CD8-positive, alpha-beta T cell (primary cell): ENCODE measurements at regions of chr16 and their contacts with region 1.

Region 1: DNA sequence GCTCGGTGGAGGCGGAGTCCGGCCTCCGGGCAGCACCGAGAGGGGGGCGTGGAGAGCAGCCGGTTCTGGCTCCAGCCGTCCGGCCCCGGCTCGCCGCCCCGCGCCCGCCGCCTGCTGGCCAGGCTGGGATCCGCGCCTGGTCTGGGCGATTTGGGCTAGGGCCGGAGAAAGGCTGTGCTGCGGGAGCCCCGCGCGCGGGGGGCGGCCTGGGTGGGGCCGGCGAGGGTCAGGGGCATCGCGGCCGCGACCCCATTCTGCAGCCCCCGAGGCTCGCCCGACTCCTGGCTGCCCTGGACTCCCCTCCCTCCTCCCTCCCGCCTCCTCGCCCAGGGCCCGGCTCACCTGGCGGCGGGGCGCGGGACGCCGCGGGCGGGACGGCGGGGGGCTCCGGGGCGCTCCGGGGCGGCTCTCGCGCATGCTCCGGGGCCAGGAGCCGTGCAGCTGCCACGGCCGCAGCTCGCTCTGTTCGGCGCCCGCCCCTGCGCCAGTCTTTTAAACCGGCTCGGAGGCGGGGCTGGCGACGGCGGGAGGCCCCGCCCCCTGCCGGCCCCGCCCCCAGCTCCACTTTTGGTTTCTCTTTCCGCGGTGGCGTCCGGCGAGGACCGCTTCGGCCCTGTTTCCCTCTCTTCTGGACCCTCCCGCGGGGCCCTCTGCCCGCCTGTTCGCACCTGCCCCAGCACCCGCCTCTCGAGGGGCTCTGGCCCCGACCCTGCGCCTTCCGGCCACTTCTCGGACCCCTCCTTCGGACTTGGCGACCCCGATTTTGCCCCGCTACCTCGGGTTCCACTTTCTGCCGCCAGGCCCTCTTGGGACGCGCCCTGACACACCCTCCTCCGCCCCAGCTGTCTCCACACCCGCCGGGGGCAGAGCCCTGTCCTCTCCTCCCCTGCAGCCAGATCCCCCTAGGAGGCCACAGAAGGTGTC is at the start of gene SOCS1:
- DNase-seq: peak; percentile 75 to 94 (median 87)
- ATAC-seq: peak; percentile 64
- H3K4me3 ChIP-seq: peak within 1 kb of the TSS; percentile 90 to 96
- H3K4me3 Mint-ChIP-seq: peak within 1 kb of the TSS; percentile 97
- H3K27ac ChIP-seq: peak within 1 kb of the TSS; percentile 81 to 93
- H3K27ac Mint-ChIP-seq: peak within 1 kb of the TSS; percentile 96
- H3K4me1 ChIP-seq: peaks cover 61% of the 10 kb centered on the region
- H3K4me1 Mint-ChIP-seq: peaks cover 56% of the 10 kb centered on the region
- H3K27me3 ChIP-seq: no peaks in the 10 kb centered on the region
- H3K27me3 Mint-ChIP-seq: no peaks in the 10 kb centered on the region
- CTCF ChIP-seq: peak; percentile 77
- total RNA-seq, gene SOCS1: 74.5 to 75.6 TPM

Region 2: GRCh38 chr16:10964039-10964890 is 291.7 kb before region 1 on chr16:
- CTCF ChIA-PET with region 1: interaction called, 17 read pairs
- POLR2A ChIA-PET with region 1: interaction called, 15 read pairs
- intact Hi-C with region 1: loop called in 1 of 2 experiments (anchors 2 kb)
- DNase-seq: peak; percentile 57 to 89 (median 82)
- ATAC-seq: peak; percentile 58
- H3K4me3 ChIP-seq: peak overlapping the region in 1 of 2 experiments; percentile 7
- H3K4me3 Mint-ChIP-seq: peak overlapping the region; percentile 18
- H3K27ac ChIP-seq: no peak overlapping the region
- H3K27ac Mint-ChIP-seq: peak overlapping the region; percentile 49
- H3K4me1 ChIP-seq: peaks cover 4% of the 10 kb centered on the region
- H3K4me1 Mint-ChIP-seq: peaks cover 16% of the 10 kb centered on the region
- H3K27me3 ChIP-seq: no peaks in the 10 kb centered on the region
- H3K27me3 Mint-ChIP-seq: no peaks in the 10 kb centered on the region
- CTCF ChIP-seq: peak; percentile 90

Region 3: DNA sequence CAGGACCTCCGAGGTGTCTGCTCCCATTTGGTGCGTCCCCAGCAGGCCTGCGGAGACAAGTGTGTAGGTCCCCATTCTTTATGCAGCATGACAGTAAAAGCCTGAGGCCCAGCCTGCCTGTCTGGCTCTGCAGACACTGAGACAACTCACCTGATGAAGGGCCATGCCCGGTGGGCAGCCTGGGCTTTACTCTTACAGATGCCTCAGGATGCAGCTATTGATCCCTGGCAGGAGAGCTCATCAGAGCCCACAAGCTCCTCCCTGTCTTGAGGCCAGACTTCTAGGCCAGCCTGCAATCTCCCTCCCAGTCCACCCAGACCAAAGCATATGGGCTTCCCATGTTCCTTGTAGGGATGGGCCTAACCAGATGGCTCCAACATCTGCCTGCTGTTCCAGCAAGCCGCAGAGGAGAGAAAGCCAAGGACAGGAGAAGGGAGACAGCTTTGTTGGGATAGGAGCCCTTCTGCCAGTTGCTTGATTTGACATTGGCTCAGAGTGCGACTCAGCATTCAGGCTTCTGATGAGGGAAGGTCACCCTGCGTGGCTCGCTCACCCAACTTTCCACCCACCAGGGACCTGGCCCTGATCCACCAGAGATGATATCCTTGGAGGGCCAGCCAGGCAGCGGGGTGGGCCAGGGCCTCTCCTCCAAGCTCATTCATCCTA is 87.5 kb before region 1 on chr16:
- CTCF ChIA-PET with region 1: no interaction called
- POLR2A ChIA-PET with region 1: no interaction called
- intact Hi-C with region 1: no loop called
- DNase-seq: no peak
- ATAC-seq: no peak
- H3K4me3 ChIP-seq: no peak overlapping the region
- H3K4me3 Mint-ChIP-seq: no peak overlapping the region
- H3K27ac ChIP-seq: no peak overlapping the region
- H3K27ac Mint-ChIP-seq: peak overlapping the region; percentile 29
- H3K4me1 ChIP-seq: no peaks in the 10 kb centered on the region
- H3K4me1 Mint-ChIP-seq: no peaks in the 10 kb centered on the region
- H3K27me3 ChIP-seq: no peaks in the 10 kb centered on the region
- H3K27me3 Mint-ChIP-seq: no peaks in the 10 kb centered on the region
- CTCF ChIP-seq: no peak

Region 4: DNA sequence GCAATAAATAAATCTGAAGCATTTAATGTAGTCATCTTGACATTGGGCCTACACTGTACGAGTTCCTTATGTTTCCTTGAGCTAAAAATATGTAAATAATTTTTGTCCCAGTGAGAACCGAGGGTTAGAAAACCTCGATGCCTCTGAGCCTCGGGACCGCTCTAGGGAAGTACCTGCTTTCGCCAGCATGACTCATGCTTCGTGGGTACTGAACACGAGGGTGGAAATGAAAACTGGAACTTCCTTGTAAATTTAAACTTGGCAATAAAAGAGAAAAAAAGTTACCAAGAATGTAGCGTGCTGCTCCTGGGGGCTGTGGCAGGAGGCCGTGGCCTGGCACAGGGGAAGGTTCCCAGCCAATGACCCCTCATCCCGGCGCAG is 74.1 kb before region 1 on chr16:
- CTCF ChIA-PET with region 1: interaction called, 3 read pairs
- POLR2A ChIA-PET with region 1: no interaction called
- intact Hi-C with region 1: loop called in 1 of 2 experiments (anchors 10 kb)
- DNase-seq: peak in 1 of 9 experiments; percentile 34
- ATAC-seq: no peak
- H3K4me3 ChIP-seq: no peak overlapping the region
- H3K4me3 Mint-ChIP-seq: no peak overlapping the region
- H3K27ac ChIP-seq: no peak overlapping the region
- H3K27ac Mint-ChIP-seq: no peak overlapping the region
- H3K4me1 ChIP-seq: peaks cover 4% of the 10 kb centered on the region
- H3K4me1 Mint-ChIP-seq: peaks cover 6% of the 10 kb centered on the region
- H3K27me3 ChIP-seq: no peaks in the 10 kb centered on the region
- H3K27me3 Mint-ChIP-seq: no peaks in the 10 kb centered on the region
- CTCF ChIP-seq: no peak

Region 5: DNA sequence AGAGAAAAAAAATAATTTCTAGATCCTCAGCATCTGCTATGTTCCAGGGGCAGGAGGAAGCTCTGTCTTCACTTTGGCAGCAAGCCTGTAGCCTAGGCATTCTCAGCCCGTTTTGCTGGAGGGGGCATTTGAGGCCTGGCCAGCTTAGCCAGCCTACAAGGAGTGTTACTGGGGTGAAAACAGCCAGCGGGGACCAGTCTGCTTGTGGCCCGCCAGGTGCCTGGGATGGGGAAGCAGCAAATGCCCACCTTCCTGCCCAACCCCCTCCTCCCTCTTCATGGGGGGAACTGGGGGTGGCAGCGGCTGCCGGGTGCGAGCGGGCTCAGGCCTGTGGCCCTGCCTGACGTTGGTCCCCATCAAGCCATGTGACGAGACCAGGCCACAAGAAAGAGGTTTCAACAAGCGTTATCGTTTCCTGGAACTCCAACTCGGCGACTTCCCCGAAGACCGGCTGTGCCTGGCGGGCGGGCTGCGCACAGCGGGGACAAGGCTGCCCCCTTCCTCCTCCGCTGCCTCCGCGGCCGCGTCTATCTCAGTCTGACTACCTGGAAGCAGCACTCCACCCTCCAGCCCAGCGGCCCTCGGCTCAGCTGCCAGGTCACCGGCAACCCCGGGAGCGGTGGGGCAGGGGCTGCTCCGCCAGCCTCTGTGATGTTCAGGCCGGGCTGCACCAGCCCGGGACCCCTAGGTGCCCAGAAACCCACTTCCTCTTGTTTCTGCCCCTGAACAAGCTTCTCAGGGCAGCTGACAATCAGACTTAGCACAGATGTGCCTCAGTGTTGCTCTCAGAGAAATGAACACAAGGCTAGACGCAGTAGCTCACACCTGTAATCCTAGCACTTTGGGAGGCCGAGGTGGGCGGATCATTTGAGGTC is 22.9 kb before region 1 on chr16:
- CTCF ChIA-PET with region 1: interaction called, 7 read pairs
- POLR2A ChIA-PET with region 1: interaction called, 36 read pairs
- intact Hi-C with region 1: loop called (anchors 1 kb)
- DNase-seq: peak; percentile 59 to 94 (median 82)
- ATAC-seq: peak; percentile 84
- H3K4me3 ChIP-seq: peak overlapping the region; percentile 37 to 45
- H3K4me3 Mint-ChIP-seq: peak overlapping the region; percentile 63
- H3K27ac ChIP-seq: peak overlapping the region; percentile 78 to 94
- H3K27ac Mint-ChIP-seq: peak overlapping the region; percentile 94
- H3K4me1 ChIP-seq: peaks cover 44% of the 10 kb centered on the region
- H3K4me1 Mint-ChIP-seq: peaks cover 55% of the 10 kb centered on the region
- H3K27me3 ChIP-seq: no peaks in the 10 kb centered on the region
- H3K27me3 Mint-ChIP-seq: no peaks in the 10 kb centered on the region
- CTCF ChIP-seq: no peak

Region 6: DNA sequence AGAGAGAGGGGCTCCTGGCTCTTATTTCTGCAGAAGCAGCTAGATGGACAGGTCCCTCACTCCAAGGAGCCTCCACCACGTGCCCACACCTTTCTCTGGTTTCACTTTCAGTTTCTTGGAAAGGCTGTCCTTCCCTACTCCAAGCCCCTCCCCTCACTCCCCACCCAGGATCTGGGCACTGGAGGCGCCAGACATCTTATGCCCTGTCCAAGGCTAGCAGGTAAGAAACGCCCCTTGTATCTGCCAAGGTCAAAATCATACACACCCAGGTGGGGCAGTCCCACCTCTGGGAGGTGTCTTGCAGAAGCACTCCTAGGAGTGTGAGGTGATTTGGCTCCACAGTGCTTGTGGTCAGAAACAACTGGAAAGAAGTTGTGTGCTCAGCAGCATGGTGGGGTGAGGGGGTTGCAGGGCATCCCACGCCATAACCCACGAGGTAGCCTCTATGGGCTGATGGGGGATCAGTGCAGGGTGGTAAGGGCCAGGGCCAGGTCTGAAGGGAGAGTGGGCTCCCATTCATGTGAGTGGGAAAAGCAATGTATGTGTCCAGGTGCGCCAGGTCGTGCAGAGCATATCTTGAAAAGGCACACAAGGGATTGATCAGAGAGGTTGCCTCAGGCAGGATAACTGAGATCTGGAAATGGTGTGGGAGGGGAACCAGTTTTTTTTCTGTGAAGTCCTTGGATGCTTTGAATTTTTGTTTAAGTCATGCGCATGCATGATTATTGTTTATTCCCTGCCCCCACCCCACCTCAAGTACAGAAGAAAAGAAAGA is 56.9 kb after region 1 on chr16:
- CTCF ChIA-PET with region 1: interaction called, 4 read pairs
- POLR2A ChIA-PET with region 1: interaction called, 10 read pairs
- intact Hi-C with region 1: loop called in 1 of 2 experiments (anchors 5 kb)
- DNase-seq: peak in 3 of 9 experiments; percentile 28 to 58 (median 33)
- ATAC-seq: peak; percentile 16
- H3K4me3 ChIP-seq: no peak overlapping the region
- H3K4me3 Mint-ChIP-seq: peak overlapping the region; percentile 20
- H3K27ac ChIP-seq: no peak overlapping the region
- H3K27ac Mint-ChIP-seq: peak overlapping the region; percentile 41
- H3K4me1 ChIP-seq: peaks cover 48% of the 10 kb centered on the region
- H3K4me1 Mint-ChIP-seq: peaks cover 48% of the 10 kb centered on the region
- H3K27me3 ChIP-seq: no peaks in the 10 kb centered on the region
- H3K27me3 Mint-ChIP-seq: no peaks in the 10 kb centered on the region
- CTCF ChIP-seq: no peak

Region 7: DNA sequence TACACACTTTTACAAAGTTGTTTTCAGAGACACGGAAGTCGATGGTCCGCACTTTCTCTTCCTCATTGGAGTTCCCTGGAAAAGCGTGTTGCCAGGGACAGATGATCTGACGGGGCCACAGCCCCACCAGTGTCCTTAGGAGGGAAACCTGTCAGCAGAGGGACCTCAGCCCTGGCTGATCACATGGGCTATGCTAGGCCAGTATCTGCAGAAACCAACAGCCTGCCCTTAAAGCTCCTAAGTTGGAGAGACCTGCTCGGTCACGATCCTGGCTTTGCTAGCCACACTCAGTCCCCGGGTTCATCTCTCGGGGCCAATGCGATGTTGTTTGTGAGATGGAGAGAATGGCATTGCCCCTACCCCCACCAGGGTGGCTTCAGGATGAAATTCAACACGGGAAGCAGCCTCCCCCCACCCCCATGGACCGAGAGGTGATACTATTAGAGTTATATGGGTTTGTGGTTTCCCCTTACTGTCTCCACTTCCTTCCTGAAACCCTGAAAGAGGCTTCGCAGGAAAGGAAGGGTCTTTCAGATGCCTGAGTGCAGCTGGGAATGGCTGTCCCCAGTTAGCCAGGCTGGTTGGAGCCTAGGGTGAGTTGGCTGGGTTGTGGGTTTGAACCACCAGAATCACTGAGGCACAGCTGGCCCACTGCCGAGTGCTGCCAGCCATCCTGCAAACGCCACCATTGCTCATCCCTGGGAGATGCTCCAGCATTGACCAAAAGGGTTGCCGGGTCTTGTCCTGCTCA is 105.9 kb after region 1 on chr16:
- CTCF ChIA-PET with region 1: interaction called, 11 read pairs
- POLR2A ChIA-PET with region 1: interaction called, 7 read pairs
- intact Hi-C with region 1: no loop called
- DNase-seq: peak in 7 of 9 experiments; percentile 15 to 61 (median 32)
- ATAC-seq: peak; percentile 67
- H3K4me3 ChIP-seq: peak overlapping the region; percentile 16 to 57
- H3K4me3 Mint-ChIP-seq: peak overlapping the region; percentile 79
- H3K27ac ChIP-seq: no peak overlapping the region
- H3K27ac Mint-ChIP-seq: no peak overlapping the region
- H3K4me1 ChIP-seq: peaks cover 34% of the 10 kb centered on the region
- H3K4me1 Mint-ChIP-seq: peaks cover 37% of the 10 kb centered on the region
- H3K27me3 ChIP-seq: peaks cover 0 to 11% of the 10 kb centered on the region in 2 experiments
- H3K27me3 Mint-ChIP-seq: no peaks in the 10 kb centered on the region
- CTCF ChIP-seq: no peak

Region 8: DNA sequence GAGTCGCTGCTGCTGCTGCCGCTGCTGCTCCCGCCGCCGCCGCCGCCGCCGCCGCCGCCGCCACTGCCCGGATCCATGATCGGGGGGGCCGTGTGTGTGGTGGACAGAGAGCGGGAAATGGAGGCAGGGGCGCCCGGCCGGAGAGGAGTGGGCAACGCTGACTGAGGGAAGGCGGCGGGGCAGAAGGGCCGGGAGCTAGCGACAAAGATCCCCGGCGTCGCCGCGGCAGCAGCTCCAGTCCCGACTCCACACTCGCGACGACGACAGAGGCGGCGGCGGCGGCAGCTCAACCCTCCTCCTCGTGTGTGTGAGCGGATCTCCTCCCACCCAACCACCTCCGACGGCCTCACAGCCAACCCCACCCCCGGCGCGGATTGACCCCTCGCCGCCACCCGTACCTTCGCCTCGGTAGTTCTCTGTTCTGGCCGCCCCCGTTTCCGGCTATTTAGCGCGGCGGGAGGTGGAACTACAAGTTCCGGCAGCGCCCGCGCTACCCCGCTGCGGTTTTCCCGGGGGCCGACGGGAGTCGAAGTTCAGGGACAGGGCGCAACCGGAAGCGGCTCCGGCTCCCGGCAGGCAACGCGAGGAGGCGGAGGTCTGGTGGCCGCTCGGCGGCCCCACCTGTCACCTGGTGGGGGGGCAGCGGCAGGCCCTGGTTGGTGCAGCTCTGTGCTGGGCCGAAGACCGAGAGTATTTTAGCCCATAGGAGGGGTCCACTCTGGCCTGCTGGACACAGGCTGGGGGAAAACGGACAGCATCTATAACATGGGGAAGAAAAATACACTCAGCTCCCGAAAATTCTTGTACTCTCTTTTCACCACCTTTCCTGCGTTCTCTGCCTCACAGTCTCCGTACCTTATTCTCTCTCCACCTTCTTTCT is 659.9 kb after region 1 on chr16 and contains the start of gene GSPT1:
- CTCF ChIA-PET with region 1: no interaction called
- POLR2A ChIA-PET with region 1: no interaction called
- intact Hi-C with region 1: loop called (anchors 5 to 10 kb)
- DNase-seq: peak; percentile 98 to 100 (median 99)
- ATAC-seq: peak; percentile 89
- H3K4me3 ChIP-seq: peak within 1 kb of the TSS; percentile 52 to 68
- H3K4me3 Mint-ChIP-seq: peak within 1 kb of the TSS; percentile 94
- H3K27ac ChIP-seq: peak within 1 kb of the TSS; percentile 68 to 75
- H3K27ac Mint-ChIP-seq: peak within 1 kb of the TSS; percentile 98
- H3K4me1 ChIP-seq: peaks cover 24% of the 10 kb centered on the region
- H3K4me1 Mint-ChIP-seq: peaks cover 29% of the 10 kb centered on the region
- H3K27me3 ChIP-seq: no peaks in the 10 kb centered on the region
- H3K27me3 Mint-ChIP-seq: no peaks in the 10 kb centered on the region
- CTCF ChIP-seq: no peak
- total RNA-seq, gene GSPT1: 296 to 297 TPM